Lower leg skin (tissue), 4 donors: ENCODE measurements at regions of chr11 and their contacts with region 1.

Region 1: GRCh38 chr11:68839054-68839865 is 2.5 kb downstream of the CPT1A start:
- DNase-seq: peak; percentile 94 to 99
- H3K4me3 ChIP-seq: no peak overlapping the region
- CTCF ChIP-seq: peak in 1 of 3 donors; percentile 58
- POLR2A ChIP-seq: no peak

Region 2: GRCh38 chr11:69088676-69089146 is 249.5 kb after region 1 on chr11:
- intact Hi-C with region 1: loop called (anchors 10 kb)
- DNase-seq: peak in 1 of 2 donors; percentile 50
- H3K4me3 ChIP-seq: no peak overlapping the region
- CTCF ChIP-seq: no peak
- POLR2A ChIP-seq: no peak